Right ventricle myocardium inferior (tissue), 1 donor: ENCODE measurements at regions of chr7 and their contacts with region 1.

Region 1: DNA sequence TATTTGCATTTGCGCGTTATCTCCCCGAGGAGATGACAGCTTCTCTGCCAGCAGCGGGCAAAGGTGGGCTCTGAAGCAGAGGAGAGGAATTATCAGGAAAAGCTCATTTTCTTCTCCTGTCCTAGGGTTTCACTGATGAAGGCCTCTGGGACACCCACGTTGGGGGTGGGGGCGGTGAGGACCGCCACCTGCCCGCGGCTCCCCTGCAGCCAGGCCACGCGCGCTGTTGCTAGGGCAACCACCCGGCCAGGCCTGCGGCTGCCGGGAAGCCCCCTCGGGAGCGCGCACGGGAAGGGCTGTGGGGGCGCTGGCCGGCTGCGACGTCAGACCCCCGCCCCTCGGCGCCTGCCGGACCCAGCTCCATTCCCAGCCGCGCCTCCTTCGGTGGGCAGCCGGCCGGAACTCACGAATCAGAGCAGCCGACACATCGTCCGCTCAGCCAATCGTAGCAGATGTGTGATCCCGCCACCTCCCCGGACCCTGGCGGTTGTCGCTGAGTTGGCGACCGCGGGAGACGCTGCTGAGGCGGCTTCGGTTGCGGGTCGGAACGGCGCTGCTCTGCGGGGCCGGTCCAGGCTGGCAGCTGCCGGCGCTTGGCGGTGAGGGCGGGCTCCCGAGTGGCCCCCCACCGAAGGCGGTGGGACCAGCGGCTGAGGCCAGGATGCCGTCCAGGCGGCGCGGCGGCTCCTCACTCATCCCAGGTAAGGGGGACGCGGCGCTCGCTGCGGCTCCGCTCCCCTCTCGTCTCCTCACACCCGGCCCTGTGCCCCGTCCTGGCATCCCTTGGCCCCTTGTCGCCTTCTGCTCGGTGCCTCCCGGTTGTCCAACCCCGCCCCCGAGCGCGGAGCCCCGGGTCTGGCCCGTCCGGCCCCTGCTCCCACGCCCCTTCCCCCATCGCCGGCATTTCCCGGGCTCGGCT is at the start of gene TPST1:
- DNase-seq: peak; percentile 93
- ATAC-seq: peak; percentile 95
- total RNA-seq, gene TPST1: 6.5 TPM

Region 2: DNA sequence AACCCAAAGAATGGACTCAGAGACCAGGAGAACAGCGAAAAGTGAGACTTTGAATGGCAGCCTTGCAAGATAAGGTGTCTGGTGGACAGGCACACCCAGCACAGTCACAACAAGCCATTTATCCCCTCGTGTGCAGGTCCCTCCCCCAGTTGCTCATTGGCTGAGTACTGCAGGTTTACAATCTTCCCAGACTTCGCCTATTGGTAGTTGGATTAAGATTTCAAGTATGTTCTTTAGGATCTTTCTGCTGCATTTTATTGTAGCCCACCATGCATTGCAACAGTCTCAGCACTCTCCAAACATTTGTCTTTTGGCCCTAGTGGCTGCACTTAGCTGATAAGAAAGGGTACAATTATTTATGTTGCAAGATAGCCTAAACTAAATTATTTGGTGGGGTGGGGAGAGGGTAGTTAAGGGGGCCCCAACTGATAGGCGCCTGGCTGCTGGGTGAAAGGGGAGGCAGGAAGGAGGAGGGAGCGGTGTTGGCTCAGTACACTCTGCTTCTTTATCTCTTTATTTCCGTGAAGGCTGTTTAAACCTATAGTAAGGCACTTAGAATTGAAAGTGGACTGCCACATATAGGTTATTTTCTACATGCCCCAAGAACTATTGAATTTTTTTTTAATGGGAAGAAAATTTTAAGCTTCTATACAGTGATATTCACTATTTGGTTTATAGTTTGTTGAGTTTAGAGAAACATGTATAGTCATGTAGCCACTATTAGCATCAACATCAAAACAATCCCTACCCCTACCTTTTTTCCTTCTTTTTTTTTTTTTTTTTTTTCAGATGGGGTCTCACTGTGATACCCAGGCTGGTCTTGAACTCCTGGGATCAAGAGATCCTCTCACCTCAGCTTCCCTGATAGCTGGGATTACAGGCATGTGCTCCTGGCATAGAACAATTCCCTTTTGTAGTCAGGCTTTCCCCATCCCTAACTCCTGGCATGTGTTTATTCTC is 277.3 kb before region 1 on chr7:
- intact Hi-C with region 1: no loop called
- DNase-seq: no peak
- ATAC-seq: no peak

Region 3: GRCh38 chr7:66150471-66150870 is 54.6 kb before region 1 on chr7:
- intact Hi-C with region 1: loop called (anchors 5 kb)
- DNase-seq: peak; percentile 75
- ATAC-seq: peak; percentile 67

Region 4: DNA sequence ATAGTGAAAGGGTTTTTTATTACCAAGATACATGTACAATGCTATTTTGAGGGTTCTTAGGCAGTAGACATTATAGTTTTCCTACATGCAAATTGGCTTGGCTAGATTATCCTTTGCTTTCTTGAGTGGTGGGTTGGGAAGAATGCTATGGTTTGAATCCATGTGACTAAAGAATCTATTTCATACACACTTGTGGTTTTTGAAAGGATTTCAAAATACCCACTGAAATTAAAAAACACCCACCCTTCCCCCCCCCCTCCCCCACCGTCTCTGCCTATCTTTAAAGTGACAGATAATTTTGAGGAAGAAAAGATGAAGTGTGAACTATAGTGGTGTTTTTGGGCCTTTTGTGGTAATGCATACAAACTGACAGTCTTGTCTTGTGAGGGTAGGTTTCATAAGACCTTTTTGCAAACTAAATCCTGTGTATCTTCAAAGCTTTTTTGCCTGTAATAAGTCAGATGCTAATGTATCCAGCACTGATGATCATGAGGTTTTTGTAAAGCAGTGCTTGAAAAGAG is 91.0 kb after region 1 on chr7:
- intact Hi-C with region 1: no loop called
- DNase-seq: no peak
- ATAC-seq: no peak

Region 5: DNA sequence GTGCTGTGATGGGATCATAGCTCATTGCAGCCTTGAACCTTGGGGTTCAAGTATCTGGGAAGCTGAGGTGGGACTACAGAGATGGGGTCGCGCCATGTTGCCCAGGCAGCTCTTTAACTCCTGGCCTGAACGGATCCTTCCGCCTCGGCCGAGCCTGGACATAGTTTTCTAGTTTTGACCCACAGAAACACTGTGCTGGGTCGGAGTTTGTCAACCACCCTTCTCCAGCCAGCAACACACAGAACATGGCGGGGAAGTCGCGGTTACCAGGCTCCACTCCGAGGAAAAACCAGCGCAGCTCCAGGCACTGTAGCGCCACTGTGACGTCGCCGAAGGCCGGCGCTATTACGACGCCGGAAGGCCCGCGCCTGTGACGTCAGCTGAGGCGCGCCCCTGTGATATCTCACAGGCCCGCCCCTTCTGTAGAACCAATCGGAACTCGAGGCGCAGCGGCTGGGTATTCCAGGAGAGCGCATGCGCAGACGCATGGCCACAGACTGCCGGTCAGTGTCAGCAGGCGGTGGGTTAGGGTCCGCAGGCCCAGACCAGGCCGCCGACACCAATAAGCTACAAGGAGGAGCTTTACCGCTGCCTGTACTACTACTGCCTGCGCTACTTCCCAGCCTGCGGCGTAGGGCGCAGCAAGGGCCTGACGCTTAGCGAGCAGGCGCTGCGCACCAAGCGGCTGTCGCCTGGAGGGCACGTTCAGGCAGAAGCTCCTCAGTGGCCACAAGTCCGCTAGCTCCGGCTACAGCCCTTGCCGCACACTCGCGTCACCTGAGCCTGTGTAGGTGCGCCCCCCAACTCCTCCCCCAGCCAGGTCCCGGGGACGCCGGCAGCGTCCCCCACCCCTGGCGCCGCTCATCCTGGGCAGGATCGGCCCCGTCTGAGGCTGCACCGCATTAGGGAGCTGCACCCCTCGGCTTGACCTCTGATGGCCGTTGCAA is 288.4 kb after region 1 on chr7:
- intact Hi-C with region 1: loop called (anchors 5 kb)
- DNase-seq: peak; percentile 99
- ATAC-seq: peak; percentile 99